ENCODE measurements at regions of chr1 and their contacts with region 1.

Region 1: GRCh38 chr1:161132410-161133219 is at the start of gene DEDD:
- DNase-seq: peak; percentile 93
- ATAC-seq: peak; percentile 96
- H3K4me3 Mint-ChIP-seq: no peak within 1 kb of the TSS
- H3K27ac Mint-ChIP-seq: no peak within 1 kb of the TSS
- H3K4me1 Mint-ChIP-seq: peaks cover 45% of the 10 kb centered on the region
- H3K27me3 Mint-ChIP-seq: no peaks in the 10 kb centered on the region
- total RNA-seq, gene DEDD: 34.5 to 36.3 TPM

Region 2: GRCh38 chr1:161117759-161118581 is 14.6 kb before region 1 on chr1 and contains the starts of genes NIT1 and PFDN2:
- CTCF ChIA-PET with region 1: interaction called, 11 read pairs
- POLR2A ChIA-PET with region 1: interaction called, 28 read pairs
- DNase-seq: peak; percentile 90
- ATAC-seq: peak; percentile 88
- H3K4me3 Mint-ChIP-seq: peak within 1 kb of the TSS; percentile 92
- H3K27ac Mint-ChIP-seq: peak within 1 kb of the TSS; percentile 95
- H3K4me1 Mint-ChIP-seq: peaks cover 56% of the 10 kb centered on the region
- H3K27me3 Mint-ChIP-seq: no peaks in the 10 kb centered on the region
- total RNA-seq, gene NIT1: 34.1 to 35.2 TPM
- total RNA-seq, gene PFDN2: 66.3 to 68.0 TPM

Region 3: GRCh38 chr1:161153679-161154426 is 21.2 kb after region 1 on chr1 and contains the start of gene UFC1:
- CTCF ChIA-PET with region 1: interaction called, 4 read pairs
- POLR2A ChIA-PET with region 1: interaction called, 12 read pairs
- DNase-seq: peak; percentile 91
- ATAC-seq: peak; percentile 94
- H3K4me3 Mint-ChIP-seq: peak within 1 kb of the TSS; percentile 88
- H3K27ac Mint-ChIP-seq: peak within 1 kb of the TSS; percentile 100
- H3K4me1 Mint-ChIP-seq: peaks cover 26% of the 10 kb centered on the region
- H3K27me3 Mint-ChIP-seq: no peaks in the 10 kb centered on the region
- total RNA-seq, gene UFC1: 103 to 104 TPM

Measured in activated CD8-positive, alpha-beta T cell treated with anti-CD3 and anti-CD28 coated beads, Interleukin-2, amount 10 ng/mL, durations not matched to agents 7 days and 5 days (primary cell).